Activated CD4-positive, alpha-beta T cell treated with anti-CD3 and anti-CD28 coated beads, Interleukin-2, amount 10 ng/mL, durations not matched to agents 7 days and 5 days (primary cell): ENCODE measurements at regions of chr10 and their contacts with region 1.

Region 1: DNA sequence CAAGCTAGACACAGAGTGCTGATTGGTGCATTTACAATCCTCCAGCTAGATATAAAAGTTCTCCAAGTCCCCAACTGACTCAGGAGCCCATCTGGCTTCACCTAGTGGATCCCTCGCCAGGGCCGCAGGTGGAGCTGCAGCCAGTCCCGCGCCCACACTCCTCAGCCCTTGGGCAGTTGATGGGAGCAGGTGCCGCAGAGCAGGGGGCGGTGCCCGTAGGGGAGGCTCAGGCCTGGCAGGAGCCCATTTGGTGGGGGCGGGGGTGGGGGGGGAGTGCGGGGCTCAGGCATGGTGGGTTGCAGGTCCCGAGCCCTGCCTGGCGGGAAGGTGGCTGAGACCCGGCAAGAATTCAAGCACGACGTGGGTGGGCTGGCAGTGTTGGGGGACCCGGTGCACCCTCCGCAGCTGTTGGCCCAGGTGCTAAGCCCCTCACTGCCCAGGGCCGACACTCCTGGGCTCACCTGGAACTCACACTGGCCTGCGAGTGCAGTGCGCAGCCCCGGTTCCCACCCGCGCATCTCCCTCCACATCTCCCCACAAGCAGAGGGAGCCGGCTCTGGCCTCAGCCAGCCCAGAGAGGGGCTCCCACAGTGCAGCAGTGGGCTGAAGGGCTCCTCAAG is 101.7 kb downstream of the ZNF438 start:
- DNase-seq: no peak
- H3K4me3 Mint-ChIP-seq: no peak overlapping the region
- H3K27ac Mint-ChIP-seq: peak overlapping the region; percentile 80
- H3K4me1 Mint-ChIP-seq: peaks cover 16% of the 10 kb centered on the region
- H3K27me3 Mint-ChIP-seq: no peaks in the 10 kb centered on the region

Region 2: DNA sequence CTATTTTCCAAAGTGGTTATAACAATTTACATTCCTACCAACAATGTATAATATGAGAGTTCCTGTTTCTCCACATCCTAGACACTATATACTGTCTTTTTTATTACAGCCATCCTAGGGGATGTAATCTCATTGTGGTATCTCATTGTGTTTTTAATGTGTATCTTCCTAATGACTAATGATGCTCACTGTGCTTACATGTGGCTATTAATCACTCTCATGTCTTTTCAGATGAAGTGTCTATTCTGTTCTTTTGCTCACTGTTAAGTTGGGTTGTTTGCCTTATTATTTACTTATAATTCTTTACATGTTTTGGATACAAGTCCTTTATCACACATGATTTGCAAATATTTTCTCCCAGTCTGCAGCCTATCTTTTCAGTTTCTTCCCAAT is 29.8 kb after region 1 on chr10:
- CTCF ChIA-PET with region 1: no interaction called
- POLR2A ChIA-PET with region 1: no interaction called
- DNase-seq: no peak
- H3K4me3 Mint-ChIP-seq: no peak overlapping the region
- H3K27ac Mint-ChIP-seq: no peak overlapping the region
- H3K4me1 Mint-ChIP-seq: peaks cover 5% of the 10 kb centered on the region
- H3K27me3 Mint-ChIP-seq: no peaks in the 10 kb centered on the region

Region 3: GRCh38 chr10:31055573-31056251 is 125.7 kb after region 1 on chr10:
- CTCF ChIA-PET with region 1: no interaction called
- POLR2A ChIA-PET with region 1: interaction called, 10 read pairs
- DNase-seq: no peak
- H3K4me3 Mint-ChIP-seq: no peak overlapping the region
- H3K27ac Mint-ChIP-seq: no peak overlapping the region
- H3K4me1 Mint-ChIP-seq: no peaks in the 10 kb centered on the region
- H3K27me3 Mint-ChIP-seq: no peaks in the 10 kb centered on the region